ENCODE measurements at regions of chr21 and their contacts with region 1.

Region 1: GRCh38 chr21:45357436-45358260 is 47.3 kb upstream of the COL18A1 start:
- DNase-seq: peak; percentile 70 to 83 (median 74)
- H3K4me3 ChIP-seq: no peak overlapping the region
- H3K27ac ChIP-seq: peak overlapping the region; percentile 80 to 95
- H3K4me1 ChIP-seq: peaks cover 7% of the 10 kb centered on the region
- H3K27me3 ChIP-seq: no peaks in the 10 kb centered on the region
- CTCF ChIP-seq: peak in 1 of 3 donors; percentile 6
- EP300 ChIP-seq: no peak
- POLR2A ChIP-seq: peak; percentile 19

Region 2: GRCh38 chr21:45302078-45303055 is 55.3 kb before region 1 on chr21:
- intact Hi-C with region 1: loop called in 1 of 4 experiments (anchors 5 kb)
- DNase-seq: peak; percentile 65 to 85 (median 78)
- H3K4me3 ChIP-seq: no peak overlapping the region
- H3K27ac ChIP-seq: peak overlapping the region; percentile 70 to 71
- H3K4me1 ChIP-seq: peaks cover 16% of the 10 kb centered on the region
- H3K27me3 ChIP-seq: no peaks in the 10 kb centered on the region
- CTCF ChIP-seq: no peak
- EP300 ChIP-seq: peak; percentile 82
- POLR2A ChIP-seq: peak; percentile 7

Region 3: GRCh38 chr21:45836268-45836655 is 478.6 kb after region 1 on chr21:
- intact Hi-C with region 1: no loop called
- DNase-seq: no peak
- H3K4me3 ChIP-seq: no peak overlapping the region
- H3K27ac ChIP-seq: no peak overlapping the region
- H3K4me1 ChIP-seq: no peaks in the 10 kb centered on the region
- H3K27me3 ChIP-seq: no peaks in the 10 kb centered on the region
- CTCF ChIP-seq: no peak
- EP300 ChIP-seq: no peak
- POLR2A ChIP-seq: no peak

Region 4: GRCh38 chr21:46028573-46029091 is 671.0 kb after region 1 on chr21:
- intact Hi-C with region 1: no loop called
- DNase-seq: peak in 3 of 5 donors; percentile 18 to 52 (median 42)
- H3K4me3 ChIP-seq: no peak overlapping the region
- H3K27ac ChIP-seq: peak overlapping the region in 1 of 2 donors; percentile 61
- H3K4me1 ChIP-seq: peaks cover 18% of the 10 kb centered on the region
- H3K27me3 ChIP-seq: no peaks in the 10 kb centered on the region
- CTCF ChIP-seq: no peak
- EP300 ChIP-seq: no peak
- POLR2A ChIP-seq: no peak

Measured in ovary (tissue), 10 donors.